Activated CD4-positive, alpha-beta T cell treated with anti-CD3 and anti-CD28 coated beads, Interleukin-2, amount 10 ng/mL, durations not matched to agents 24 days and 14 days (primary cell): ENCODE measurements at regions of chr19 and their contacts with region 1.

Region 1: GRCh38 chr19:36687214-36688056 is at the start of gene ZNF567:
- DNase-seq: peak; percentile 99
- H3K4me3 Mint-ChIP-seq: peak within 1 kb of the TSS; percentile 98
- H3K27ac Mint-ChIP-seq: peak within 1 kb of the TSS; percentile 95
- H3K4me1 Mint-ChIP-seq: peaks cover 28% of the 10 kb centered on the region
- H3K27me3 Mint-ChIP-seq: no peaks in the 10 kb centered on the region
- total RNA-seq, gene ZNF567: 8.2 and 8.3 TPM in 2 replicates

Region 2: GRCh38 chr19:36528194-36528920 is 159.1 kb before region 1 on chr19 and contains the start of gene ZNF260:
- intact Hi-C with region 1: loop called (anchors 1 kb)
- DNase-seq: peak; percentile 97
- H3K4me3 Mint-ChIP-seq: peak within 1 kb of the TSS; percentile 96
- H3K27ac Mint-ChIP-seq: peak within 1 kb of the TSS; percentile 95
- H3K4me1 Mint-ChIP-seq: peaks cover 17% of the 10 kb centered on the region
- H3K27me3 Mint-ChIP-seq: no peaks in the 10 kb centered on the region
- total RNA-seq, gene ZNF260: 6.7 and 8.0 TPM in 2 replicates

Region 3: DNA sequence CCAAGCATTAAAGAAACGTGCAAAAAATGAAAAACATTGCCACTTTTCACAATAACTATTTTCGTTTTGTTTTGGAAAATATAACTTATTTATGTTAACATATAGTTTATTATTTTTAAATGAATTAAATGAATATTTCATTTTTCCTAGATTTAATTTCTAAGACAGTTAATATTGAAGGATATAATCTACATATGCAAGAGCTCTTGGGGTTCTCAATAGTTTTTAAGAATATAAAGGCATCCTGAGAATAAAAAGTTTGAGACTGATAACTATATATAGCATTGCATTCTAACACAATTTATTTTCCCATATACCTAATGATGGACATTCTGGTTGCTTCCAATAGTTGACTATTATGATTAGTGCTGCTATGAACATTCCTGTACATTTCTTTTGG is 40.7 kb before region 1 on chr19:
- intact Hi-C with region 1: no loop called
- DNase-seq: no peak
- H3K4me3 Mint-ChIP-seq: no peak overlapping the region
- H3K27ac Mint-ChIP-seq: no peak overlapping the region
- H3K4me1 Mint-ChIP-seq: no peaks in the 10 kb centered on the region
- H3K27me3 Mint-ChIP-seq: no peaks in the 10 kb centered on the region

Region 4: GRCh38 chr19:36665832-36666231 is 21.6 kb before region 1 on chr19:
- intact Hi-C with region 1: loop called (anchors 1 kb)
- DNase-seq: no peak
- H3K4me3 Mint-ChIP-seq: peak overlapping the region; percentile 98
- H3K27ac Mint-ChIP-seq: peak overlapping the region; percentile 76
- H3K4me1 Mint-ChIP-seq: peaks cover 23% of the 10 kb centered on the region
- H3K27me3 Mint-ChIP-seq: no peaks in the 10 kb centered on the region

Region 5: GRCh38 chr19:36719687-36720556 is 32.5 kb after region 1 on chr19:
- intact Hi-C with region 1: no loop called
- DNase-seq: no peak
- H3K4me3 Mint-ChIP-seq: no peak overlapping the region
- H3K27ac Mint-ChIP-seq: no peak overlapping the region
- H3K4me1 Mint-ChIP-seq: no peaks in the 10 kb centered on the region
- H3K27me3 Mint-ChIP-seq: no peaks in the 10 kb centered on the region

Region 6: GRCh38 chr19:36850559-36851442 is 163.4 kb after region 1 on chr19 and contains the start of gene ZNF345:
- intact Hi-C with region 1: loop called (anchors 1 kb)
- DNase-seq: peak; percentile 96
- H3K4me3 Mint-ChIP-seq: no peak within 1 kb of the TSS
- H3K27ac Mint-ChIP-seq: no peak within 1 kb of the TSS
- H3K4me1 Mint-ChIP-seq: peaks cover 2% of the 10 kb centered on the region
- H3K27me3 Mint-ChIP-seq: no peaks in the 10 kb centered on the region
- total RNA-seq, gene ZNF345: 2.8 and 4.2 TPM in 2 replicates

Region 7: DNA sequence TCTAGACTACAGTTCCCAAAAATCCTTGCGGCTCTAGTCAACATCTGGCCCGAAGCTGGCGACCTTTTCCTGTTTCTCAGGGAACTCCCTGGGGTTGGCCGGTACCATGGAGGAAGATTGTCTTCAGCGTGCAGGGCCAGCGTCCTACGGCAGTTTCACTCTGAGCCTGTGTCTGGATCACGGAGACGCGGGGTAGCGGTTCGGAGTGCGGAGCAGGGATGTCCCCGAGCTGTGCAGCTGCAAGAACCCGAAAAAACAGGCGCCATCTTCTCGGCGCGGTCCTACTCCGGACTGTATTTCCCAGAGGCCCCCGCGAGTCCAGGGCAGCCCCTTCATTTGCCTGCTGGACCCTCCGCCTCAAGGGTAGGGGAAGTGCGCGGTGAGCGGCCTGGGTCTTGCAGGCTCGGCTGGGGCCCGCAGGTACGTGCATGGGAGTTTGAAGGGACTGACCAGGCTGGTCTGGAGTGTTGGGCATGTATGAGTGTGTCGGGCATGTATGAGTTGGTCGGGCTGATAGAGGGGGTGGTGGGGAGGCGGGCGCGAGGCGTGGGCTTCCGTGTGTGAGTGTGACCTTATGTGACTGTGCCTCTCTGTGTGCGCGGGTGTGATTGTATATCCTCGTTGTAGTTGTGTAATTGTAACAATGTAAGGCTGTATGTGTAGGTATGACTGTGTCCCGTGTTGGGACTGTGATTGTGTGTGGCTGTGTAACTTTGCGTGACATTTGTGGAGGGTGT is 530.6 kb after region 1 on chr19 and contains the start of gene ZNF383:
- intact Hi-C with region 1: loop called (anchors 5 kb)
- DNase-seq: peak; percentile 95
- H3K4me3 Mint-ChIP-seq: peak within 1 kb of the TSS; percentile 97
- H3K27ac Mint-ChIP-seq: peak within 1 kb of the TSS; percentile 94
- H3K4me1 Mint-ChIP-seq: peaks cover 16% of the 10 kb centered on the region
- H3K27me3 Mint-ChIP-seq: no peaks in the 10 kb centered on the region
- total RNA-seq, gene ZNF383: 6.4 and 8.6 TPM in 2 replicates